Calu3 (cell line): ENCODE measurements at regions of chr2 and their contacts with region 1.

Region 1: DNA sequence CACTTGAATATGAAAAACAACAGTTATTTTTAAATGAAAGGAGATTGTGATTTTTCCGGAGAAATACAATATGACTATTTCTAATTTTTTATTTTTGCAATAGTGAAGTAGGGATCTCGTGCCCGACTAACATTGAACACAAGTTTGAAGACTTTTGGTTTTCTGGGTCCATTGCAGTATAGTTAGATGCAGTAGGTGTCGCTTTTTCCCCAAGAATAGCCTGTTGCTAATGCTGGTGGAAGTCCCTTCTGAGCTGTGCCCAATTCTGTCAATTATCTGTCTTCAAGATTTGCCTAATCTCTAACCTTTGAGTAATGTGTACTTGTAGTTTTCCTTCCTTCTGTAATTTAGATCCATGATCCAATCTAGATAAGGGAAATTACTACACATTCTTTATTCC is 36.5 kb downstream of the SEMA4F start:
- DNase-seq: peak; percentile 59
- H3K4me3 Mint-ChIP-seq: no peak overlapping the region
- H3K27ac Mint-ChIP-seq: no peak overlapping the region
- H3K4me1 Mint-ChIP-seq: peaks cover 31% of the 10 kb centered on the region
- H3K27me3 Mint-ChIP-seq: no peaks in the 10 kb centered on the region
- CTCF ChIP-seq: peak; percentile 68

Region 2: GRCh38 chr2:74876081-74876886 is 185.7 kb after region 1 on chr2:
- CTCF ChIA-PET with region 1: interaction called, 4 read pairs
- intact Hi-C with region 1: loop called (anchors 1 kb)
- DNase-seq: peak; percentile 51
- H3K4me3 Mint-ChIP-seq: no peak overlapping the region
- H3K27ac Mint-ChIP-seq: no peak overlapping the region
- H3K4me1 Mint-ChIP-seq: peaks cover 24% of the 10 kb centered on the region
- H3K27me3 Mint-ChIP-seq: no peaks in the 10 kb centered on the region
- CTCF ChIP-seq: peak; percentile 66

Region 3: DNA sequence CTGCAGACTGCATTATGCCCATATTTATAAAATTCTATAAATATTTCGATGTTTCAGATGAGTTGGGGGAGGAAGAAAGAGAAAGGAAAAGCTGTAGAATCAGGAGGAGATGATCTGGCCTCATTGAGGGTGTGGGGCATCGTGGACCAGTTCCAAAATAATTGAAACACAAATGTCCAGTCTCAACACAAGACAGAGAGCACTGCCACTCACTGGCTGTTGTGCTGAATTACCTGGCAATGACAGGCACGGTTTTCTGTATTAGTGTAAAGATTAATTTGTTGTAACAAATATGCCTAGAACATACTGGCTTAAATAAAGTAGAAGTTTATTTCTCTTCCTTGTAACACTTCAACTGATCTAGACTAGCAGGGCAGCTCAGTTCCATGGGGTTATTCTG is 292.0 kb after region 1 on chr2:
- CTCF ChIA-PET with region 1: no interaction called
- intact Hi-C with region 1: loop called (anchors 5 kb)
- DNase-seq: no peak
- H3K4me3 Mint-ChIP-seq: no peak overlapping the region
- H3K27ac Mint-ChIP-seq: no peak overlapping the region
- H3K4me1 Mint-ChIP-seq: no peaks in the 10 kb centered on the region
- H3K27me3 Mint-ChIP-seq: no peaks in the 10 kb centered on the region
- CTCF ChIP-seq: no peak